Activated CD4-positive, alpha-beta T cell treated with anti-CD3 and anti-CD28 coated beads, Interleukin-2, amount 10 ng/mL, durations not matched to agents 24 days and 14 days (primary cell): ENCODE measurements at regions of chr20 and their contacts with region 1.

Region 1: DNA sequence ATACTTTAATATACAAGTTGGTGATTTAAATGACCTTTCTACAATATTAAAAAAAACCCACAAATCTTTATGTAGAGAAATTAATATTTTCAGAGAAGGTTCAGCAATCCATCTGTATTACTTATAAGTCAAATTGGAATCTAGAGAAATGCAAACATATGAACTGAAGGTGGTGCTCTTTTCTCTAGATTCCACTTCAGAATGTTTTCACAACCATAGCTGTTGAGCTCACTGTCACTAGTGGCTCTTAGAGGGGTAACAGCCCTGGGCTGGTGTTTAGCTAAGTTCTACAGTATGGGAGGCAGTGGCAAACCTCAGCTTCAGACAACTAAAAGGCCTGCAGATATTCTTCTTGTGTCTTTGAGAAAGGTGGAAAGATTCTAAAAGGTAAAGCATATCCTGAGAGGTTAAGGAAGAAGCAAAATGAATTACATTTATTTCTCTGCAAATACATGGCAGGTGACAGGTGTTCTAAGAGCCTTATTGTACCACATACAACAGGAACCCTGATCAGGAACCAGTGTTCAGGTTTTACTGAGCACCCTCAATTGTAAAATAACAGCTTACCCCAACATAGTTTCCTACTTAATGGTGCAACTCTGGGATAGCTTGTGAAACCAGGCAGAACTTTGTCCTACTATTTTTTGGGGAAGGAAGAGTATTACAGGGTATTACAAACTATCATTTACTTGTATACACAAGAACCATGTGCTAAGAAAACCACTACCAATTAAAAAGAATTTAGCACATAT is 56.6 kb upstream of the SAMHD1 start:
- DNase-seq: peak; percentile 79
- H3K4me3 Mint-ChIP-seq: no peak overlapping the region
- H3K27ac Mint-ChIP-seq: peak overlapping the region; percentile 79
- H3K4me1 Mint-ChIP-seq: peaks cover 13% of the 10 kb centered on the region
- H3K27me3 Mint-ChIP-seq: no peaks in the 10 kb centered on the region

Region 2: GRCh38 chr20:37081717-37082289 is 73.7 kb after region 1 on chr20:
- intact Hi-C with region 1: loop called (anchors 1 kb)
- DNase-seq: peak; percentile 80
- H3K4me3 Mint-ChIP-seq: no peak overlapping the region
- H3K27ac Mint-ChIP-seq: peak overlapping the region; percentile 49
- H3K4me1 Mint-ChIP-seq: peaks cover 32% of the 10 kb centered on the region
- H3K27me3 Mint-ChIP-seq: no peaks in the 10 kb centered on the region

Region 3: DNA sequence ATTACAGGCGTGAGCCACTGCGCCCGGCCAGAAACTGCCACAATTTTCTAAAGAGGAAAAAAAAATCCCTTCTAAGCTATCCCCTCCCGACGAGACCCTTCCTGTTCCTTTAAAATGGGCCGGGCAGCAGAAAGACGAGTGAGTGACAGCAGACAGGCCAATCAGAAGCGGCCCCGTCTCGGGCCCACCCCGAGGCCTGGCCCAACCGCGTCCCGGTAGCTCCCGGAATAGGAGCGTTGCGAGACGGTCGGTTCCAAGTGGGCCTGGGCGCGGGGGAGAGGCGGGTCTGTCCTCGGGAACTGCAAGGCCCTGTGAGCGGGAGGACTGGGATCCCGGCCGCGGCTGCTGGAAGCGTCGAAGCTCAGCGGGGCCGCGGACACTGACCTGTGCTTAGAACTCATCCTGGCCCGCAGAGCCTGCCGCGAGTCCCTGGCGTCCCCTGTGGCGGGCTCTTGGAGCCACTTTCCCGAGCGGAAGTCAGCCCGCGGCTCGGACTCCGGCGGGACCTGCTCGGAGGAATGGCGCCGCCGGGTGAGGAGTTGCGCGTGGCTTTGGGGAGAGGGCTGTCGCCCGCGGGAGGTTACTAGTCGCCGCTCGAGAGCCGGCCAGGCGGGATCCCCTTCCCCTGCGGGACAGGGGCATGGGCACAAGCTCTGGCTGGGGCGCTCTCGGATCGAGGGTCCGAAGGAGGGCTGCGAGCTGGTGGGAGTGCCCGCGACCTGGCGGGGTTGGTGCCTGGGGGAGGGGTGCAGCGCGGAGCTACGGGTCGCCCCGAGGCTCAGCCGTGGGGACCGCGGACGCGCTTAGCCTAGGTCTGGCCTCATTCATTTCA is 171.0 kb after region 1 on chr20 and contains the starts of genes MROH8 and RPN2:
- intact Hi-C with region 1: loop called (anchors 2 kb)
- DNase-seq: peak; percentile 98
- H3K4me3 Mint-ChIP-seq: peak within 1 kb of the TSS; percentile 92
- H3K27ac Mint-ChIP-seq: peak within 1 kb of the TSS; percentile 93
- H3K4me1 Mint-ChIP-seq: peaks cover 26% of the 10 kb centered on the region
- H3K27me3 Mint-ChIP-seq: peaks cover 6% of the 10 kb centered on the region
- total RNA-seq, gene MROH8: 0.63 and 1.3 TPM in 2 replicates
- total RNA-seq, gene RPN2: 208 and 213 TPM in 2 replicates